ENCODE measurements at regions of chr13 and their contacts with region 1.

Region 1: DNA sequence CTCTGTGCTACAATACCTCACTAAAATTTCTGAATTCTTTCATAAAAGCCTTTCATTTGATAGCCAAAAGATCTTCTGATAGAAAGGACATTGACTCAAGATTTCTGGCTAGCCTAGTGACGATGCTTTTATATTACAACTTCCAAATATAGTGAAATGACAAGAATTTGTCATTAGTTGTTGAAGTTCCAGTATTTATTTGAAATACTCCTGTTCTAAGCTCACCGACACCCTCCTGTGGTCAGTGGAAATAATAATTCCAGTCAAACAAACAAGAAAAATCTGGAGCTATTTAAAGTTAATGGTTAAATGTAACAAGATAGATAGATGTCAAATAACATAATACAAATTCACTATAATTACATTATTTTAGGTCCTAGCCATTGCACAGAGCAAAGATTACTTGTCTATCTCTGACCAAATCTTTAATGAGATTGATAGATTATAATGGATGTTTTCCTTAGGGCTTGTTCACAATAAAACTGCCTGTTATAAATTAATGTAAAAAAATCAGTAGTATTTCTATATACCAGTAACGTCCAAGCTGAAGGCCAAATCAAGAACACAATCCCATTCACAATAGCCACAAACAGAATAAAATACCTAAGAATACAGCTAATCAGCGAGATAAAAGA is 195.5 kb downstream of the RGCC start:
- DNase-seq: no peak
- H3K4me3 ChIP-seq: no peak overlapping the region
- H3K27ac ChIP-seq: peak overlapping the region; percentile 58
- H3K4me1 ChIP-seq: peaks cover 36% of the 10 kb centered on the region
- H3K27me3 ChIP-seq: no peaks in the 10 kb centered on the region
- CTCF ChIP-seq: peak; percentile 78

Region 2: GRCh38 chr13:41352935-41353840 is 299.7 kb before region 1 on chr13:
- intact Hi-C with region 1: loop called (anchors 5 kb)
- DNase-seq: no peak
- H3K4me3 ChIP-seq: no peak overlapping the region
- H3K27ac ChIP-seq: no peak overlapping the region
- H3K4me1 ChIP-seq: peaks cover 29% of the 10 kb centered on the region
- H3K27me3 ChIP-seq: no peaks in the 10 kb centered on the region
- CTCF ChIP-seq: peak; percentile 85

Region 3: GRCh38 chr13:41411522-41411921 is 241.3 kb before region 1 on chr13:
- intact Hi-C with region 1: loop called (anchors 10 kb)
- DNase-seq: no peak
- H3K4me3 ChIP-seq: no peak overlapping the region
- H3K27ac ChIP-seq: no peak overlapping the region
- H3K4me1 ChIP-seq: no peaks in the 10 kb centered on the region
- H3K27me3 ChIP-seq: no peaks in the 10 kb centered on the region
- CTCF ChIP-seq: peak; percentile 50

Region 4: DNA sequence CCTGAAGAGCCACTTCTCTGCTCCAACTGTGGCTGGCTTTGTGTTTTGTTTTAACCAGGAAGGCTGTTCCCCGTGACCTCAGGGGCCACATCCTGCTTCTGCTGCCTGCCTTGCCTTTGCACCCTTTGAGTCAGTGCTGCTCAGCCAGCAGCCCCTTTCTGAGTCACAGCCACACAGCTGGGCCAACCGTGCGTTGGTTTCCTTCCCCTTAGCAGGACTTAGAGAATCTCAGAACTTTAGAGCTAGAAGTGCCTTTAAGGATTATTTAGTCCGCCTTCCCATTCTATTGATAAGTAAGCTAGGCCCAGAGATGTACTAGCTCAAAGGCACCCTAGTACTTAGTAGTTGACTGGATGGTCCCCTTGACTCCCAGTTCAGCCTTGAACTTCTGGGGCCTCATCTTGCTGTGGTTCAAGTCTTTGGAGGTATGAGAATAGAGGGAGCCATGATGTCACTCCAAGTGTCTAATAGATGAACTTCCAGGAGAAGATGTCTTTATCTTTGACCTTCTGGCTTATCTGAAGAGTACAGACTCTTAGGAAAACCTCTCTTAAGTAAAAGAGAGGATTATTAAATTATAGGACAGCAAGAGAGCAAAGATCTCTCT is 187.5 kb before region 1 on chr13:
- intact Hi-C with region 1: loop called (anchors 10 kb)
- DNase-seq: peak; percentile 50
- H3K4me3 ChIP-seq: peak overlapping the region; percentile 72
- H3K27ac ChIP-seq: peak overlapping the region; percentile 79
- H3K4me1 ChIP-seq: peaks cover 54% of the 10 kb centered on the region
- H3K27me3 ChIP-seq: peaks cover 19% of the 10 kb centered on the region
- CTCF ChIP-seq: no peak

Region 5: DNA sequence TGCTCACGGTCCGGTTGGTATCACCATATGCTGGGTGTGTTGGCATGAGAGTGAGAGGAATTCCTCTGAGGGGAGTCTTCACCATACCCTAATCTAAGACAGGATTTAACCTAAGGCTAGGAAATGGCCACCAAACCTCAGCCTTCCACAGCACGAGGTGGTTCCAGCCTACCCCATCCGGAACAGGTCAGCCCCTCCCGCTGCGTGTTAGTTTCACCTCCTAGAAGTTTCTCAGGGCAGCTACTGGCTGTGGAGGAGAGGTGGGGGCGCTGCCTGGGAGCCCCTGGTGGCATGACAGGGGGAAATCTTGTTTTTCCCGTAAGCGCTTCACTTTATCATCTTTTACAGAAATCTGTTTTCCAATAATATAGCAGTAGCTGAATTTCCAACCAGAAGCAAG is 140.4 kb before region 1 on chr13:
- intact Hi-C with region 1: no loop called
- DNase-seq: no peak
- H3K4me3 ChIP-seq: no peak overlapping the region
- H3K27ac ChIP-seq: no peak overlapping the region
- H3K4me1 ChIP-seq: no peaks in the 10 kb centered on the region
- H3K27me3 ChIP-seq: no peaks in the 10 kb centered on the region
- CTCF ChIP-seq: no peak

Region 6: GRCh38 chr13:41613984-41614661 is 38.7 kb before region 1 on chr13:
- intact Hi-C with region 1: loop called (anchors 5 kb)
- DNase-seq: peak; percentile 66
- H3K4me3 ChIP-seq: no peak overlapping the region
- H3K27ac ChIP-seq: peak overlapping the region; percentile 79
- H3K4me1 ChIP-seq: peaks cover 54% of the 10 kb centered on the region
- H3K27me3 ChIP-seq: no peaks in the 10 kb centered on the region
- CTCF ChIP-seq: no peak

Region 7: GRCh38 chr13:41995946-41996345 is 343.1 kb after region 1 on chr13:
- intact Hi-C with region 1: no loop called
- DNase-seq: no peak
- H3K4me3 ChIP-seq: no peak overlapping the region
- H3K27ac ChIP-seq: no peak overlapping the region
- H3K4me1 ChIP-seq: peaks cover 3% of the 10 kb centered on the region
- H3K27me3 ChIP-seq: no peaks in the 10 kb centered on the region
- CTCF ChIP-seq: no peak